Calu3 (cell line): ENCODE measurements at regions of chr12 and their contacts with region 1.

Region 1: GRCh38 chr12:76790564-76791552 is 26.9 kb downstream of the ZDHHC17 start:
- DNase-seq: no peak
- H3K4me3 Mint-ChIP-seq: no peak overlapping the region
- H3K27ac Mint-ChIP-seq: no peak overlapping the region
- H3K4me1 Mint-ChIP-seq: no peaks in the 10 kb centered on the region
- H3K27me3 Mint-ChIP-seq: no peaks in the 10 kb centered on the region
- CTCF ChIP-seq: peak; percentile 56

Region 2: DNA sequence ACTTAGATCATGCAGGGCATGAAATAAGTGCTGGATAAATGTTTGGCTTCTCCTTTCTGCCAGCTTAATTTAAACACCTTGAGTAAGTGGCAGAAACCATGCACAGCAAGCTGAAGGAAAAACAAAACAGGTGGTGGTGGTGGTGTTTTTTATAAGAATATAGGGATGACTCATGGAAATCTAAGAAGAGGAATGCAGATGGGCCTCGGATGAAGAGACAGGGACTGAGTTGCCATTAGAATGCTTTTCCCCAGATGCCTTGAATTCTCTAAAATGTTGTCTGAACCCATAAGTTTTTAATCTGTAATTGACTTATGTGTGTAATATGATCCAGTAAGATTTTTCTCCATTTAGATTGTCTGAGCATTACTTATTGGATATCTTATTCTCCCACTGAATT is 120.1 kb before region 1 on chr12:
- CTCF ChIA-PET with region 1: no interaction called
- intact Hi-C with region 1: no loop called
- DNase-seq: no peak
- H3K4me3 Mint-ChIP-seq: no peak overlapping the region
- H3K27ac Mint-ChIP-seq: no peak overlapping the region
- H3K4me1 Mint-ChIP-seq: no peaks in the 10 kb centered on the region
- H3K27me3 Mint-ChIP-seq: no peaks in the 10 kb centered on the region
- CTCF ChIP-seq: no peak

Region 3: GRCh38 chr12:76685246-76685678 is 105.6 kb before region 1 on chr12:
- CTCF ChIA-PET with region 1: no interaction called
- intact Hi-C with region 1: loop called (anchors 5 kb)
- DNase-seq: no peak
- H3K4me3 Mint-ChIP-seq: no peak overlapping the region
- H3K27ac Mint-ChIP-seq: no peak overlapping the region
- H3K4me1 Mint-ChIP-seq: no peaks in the 10 kb centered on the region
- H3K27me3 Mint-ChIP-seq: no peaks in the 10 kb centered on the region
- CTCF ChIP-seq: no peak

Region 4: GRCh38 chr12:76927170-76927784 is 136.4 kb after region 1 on chr12:
- CTCF ChIA-PET with region 1: no interaction called
- intact Hi-C with region 1: loop called (anchors 10 kb)
- DNase-seq: peak; percentile 43
- H3K4me3 Mint-ChIP-seq: no peak overlapping the region
- H3K27ac Mint-ChIP-seq: no peak overlapping the region
- H3K4me1 Mint-ChIP-seq: no peaks in the 10 kb centered on the region
- H3K27me3 Mint-ChIP-seq: peaks cover 21% of the 10 kb centered on the region
- CTCF ChIP-seq: peak; percentile 38